Gastrocnemius medialis (tissue), 4 donors: ENCODE measurements at regions of chr7 and their contacts with region 1.

Region 1: GRCh38 chr7:2471396-2471795 is 4.8 kb downstream of the GRIFIN start:
- DNase-seq: no peak
- ATAC-seq: no peak
- H3K4me3 ChIP-seq: no peak overlapping the region
- H3K27ac ChIP-seq: no peak overlapping the region
- H3K4me1 ChIP-seq: no peaks in the 10 kb centered on the region
- H3K27me3 ChIP-seq: peaks cover 8 to 17% (median 14%) of the 10 kb centered on the region in 3 donors
- CTCF ChIP-seq: no peak
- POLR2A ChIP-seq: no peak

Region 2: GRCh38 chr7:2214636-2215035 is 256.8 kb before region 1 on chr7:
- in situ Hi-C with region 1: no loop called
- intact Hi-C with region 1: no loop called
- DNase-seq: no peak
- ATAC-seq: no peak
- H3K4me3 ChIP-seq: no peak overlapping the region
- H3K27ac ChIP-seq: no peak overlapping the region
- H3K4me1 ChIP-seq: no peaks in the 10 kb centered on the region
- H3K27me3 ChIP-seq: no peaks in the 10 kb centered on the region
- CTCF ChIP-seq: no peak
- POLR2A ChIP-seq: no peak

Region 3: GRCh38 chr7:2451171-2452073 is 20.0 kb before region 1 on chr7:
- in situ Hi-C with region 1: no loop called
- intact Hi-C with region 1: loop called (anchors 2 kb)
- DNase-seq: peak; percentile 32 to 61
- ATAC-seq: peak; percentile 78 to 91
- H3K4me3 ChIP-seq: peak overlapping the region; percentile 39 to 65 (median 55)
- H3K27ac ChIP-seq: no peak overlapping the region
- H3K4me1 ChIP-seq: peaks cover 0 to 9% of the 10 kb centered on the region in 2 donors
- H3K27me3 ChIP-seq: no peaks in the 10 kb centered on the region
- CTCF ChIP-seq: peak; percentile 66 to 92 (median 84)
- POLR2A ChIP-seq: no peak